ENCODE measurements at regions of chr7 and their contacts with region 1.

Region 1: DNA sequence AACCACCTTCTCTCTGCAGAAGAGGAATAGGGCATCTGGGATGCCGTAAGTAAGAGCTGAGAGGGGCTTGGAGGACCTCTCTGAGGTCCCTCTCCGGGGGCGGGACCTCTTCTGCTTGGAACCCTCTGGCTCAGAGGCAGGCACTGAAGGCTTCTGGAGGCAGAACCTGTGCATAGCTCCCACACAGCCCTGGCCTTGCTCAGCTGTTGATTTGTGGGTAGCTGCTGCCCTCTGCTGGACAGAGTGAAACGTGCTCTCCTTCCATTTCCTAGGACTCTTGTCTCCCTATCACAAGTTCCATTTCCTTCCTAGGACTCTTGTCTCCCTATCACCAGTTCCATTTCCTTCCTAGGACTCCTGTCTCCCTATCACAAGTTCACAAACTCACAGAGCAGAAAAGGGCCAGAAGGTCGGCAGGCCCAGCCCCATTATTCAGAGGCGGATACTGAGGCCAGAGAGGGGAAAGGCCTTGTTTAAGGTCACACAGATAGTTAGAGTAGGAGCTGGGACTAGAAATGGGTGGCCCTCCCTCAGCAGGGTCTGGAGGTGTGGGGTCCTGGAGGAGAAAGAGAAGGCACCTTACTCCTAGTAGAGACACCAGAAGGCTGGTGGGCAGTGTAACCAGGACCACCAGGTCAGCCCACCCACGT is 30.3 kb upstream of the GARS1 start:
- DNase-seq: peak; percentile 89

Region 2: DNA sequence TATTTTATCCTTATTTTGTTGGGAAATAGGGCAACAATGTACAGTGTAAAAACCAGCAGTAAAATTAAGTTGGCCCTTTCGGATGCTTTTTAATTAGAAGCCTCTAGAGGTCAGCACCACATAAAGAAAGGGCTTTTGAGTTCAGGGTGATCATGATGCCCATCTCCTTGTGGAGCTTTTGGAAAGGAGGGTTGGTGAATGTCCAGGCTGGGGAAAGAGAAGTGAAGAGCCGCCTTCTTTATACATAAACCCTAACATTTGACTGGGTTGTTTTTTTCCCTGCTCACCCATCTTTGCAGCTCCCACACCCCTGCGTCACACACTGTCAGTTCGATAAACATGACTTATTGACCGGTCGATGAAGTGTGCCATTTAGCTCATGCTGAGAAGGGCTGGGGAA is 399.8 kb before region 1 on chr7:
- intact Hi-C with region 1: loop called (anchors 2 kb)
- DNase-seq: no peak

Region 3: DNA sequence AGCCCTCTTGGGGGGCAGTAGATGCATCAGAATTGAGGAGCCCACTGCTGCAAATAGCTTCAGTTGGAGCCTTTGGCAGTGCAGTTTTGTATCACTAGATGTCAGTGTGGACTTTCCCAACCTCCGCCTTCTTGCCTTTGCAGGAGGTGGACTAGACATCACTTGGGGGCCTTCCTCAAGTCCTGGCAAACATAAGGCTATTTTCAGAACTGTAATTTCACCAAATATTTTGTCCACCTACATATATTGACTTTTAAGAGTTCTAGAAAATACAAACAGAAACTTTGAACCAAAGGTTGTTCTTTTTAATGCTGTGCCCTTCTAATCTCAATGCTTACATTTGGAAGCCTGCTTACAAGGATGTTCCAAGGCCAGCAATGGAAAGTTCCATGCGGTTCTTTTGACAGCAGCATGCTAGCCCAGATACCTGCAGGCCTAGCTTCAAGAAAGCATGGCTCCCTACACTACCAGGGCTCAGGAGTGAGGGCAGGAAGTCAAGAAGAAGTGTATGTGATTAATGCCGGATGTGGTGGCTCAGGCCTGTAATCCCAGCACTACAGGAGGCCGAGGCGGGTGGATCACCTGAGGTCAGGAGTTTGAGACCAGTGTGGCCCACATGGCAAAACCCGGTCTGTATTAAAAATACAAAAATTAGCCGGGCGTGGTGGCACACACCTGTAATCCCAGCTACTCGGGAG is 288.0 kb before region 1 on chr7:
- intact Hi-C with region 1: loop called (anchors 5 kb)
- DNase-seq: no peak

Region 4: DNA sequence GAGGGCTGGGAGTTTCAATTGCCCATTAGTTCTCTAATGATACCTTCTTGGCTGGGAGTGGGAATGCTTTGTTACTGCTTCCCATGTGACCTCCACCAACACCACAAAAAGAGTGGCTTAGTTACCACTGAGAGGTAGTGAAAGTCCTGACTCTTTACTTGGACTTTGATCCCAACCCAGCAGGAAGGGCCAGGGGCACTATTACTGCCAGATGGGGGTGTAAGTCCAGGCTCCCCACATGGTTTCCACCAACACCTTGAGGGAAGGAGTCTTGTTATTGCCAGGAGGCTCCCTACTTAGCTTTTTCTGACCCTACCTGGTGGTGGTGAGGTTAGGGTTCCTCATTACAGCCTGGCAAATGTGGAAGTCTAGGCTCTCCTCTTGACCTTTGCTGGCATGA is 71.1 kb before region 1 on chr7:
- intact Hi-C with region 1: no loop called
- DNase-seq: no peak

Region 5: DNA sequence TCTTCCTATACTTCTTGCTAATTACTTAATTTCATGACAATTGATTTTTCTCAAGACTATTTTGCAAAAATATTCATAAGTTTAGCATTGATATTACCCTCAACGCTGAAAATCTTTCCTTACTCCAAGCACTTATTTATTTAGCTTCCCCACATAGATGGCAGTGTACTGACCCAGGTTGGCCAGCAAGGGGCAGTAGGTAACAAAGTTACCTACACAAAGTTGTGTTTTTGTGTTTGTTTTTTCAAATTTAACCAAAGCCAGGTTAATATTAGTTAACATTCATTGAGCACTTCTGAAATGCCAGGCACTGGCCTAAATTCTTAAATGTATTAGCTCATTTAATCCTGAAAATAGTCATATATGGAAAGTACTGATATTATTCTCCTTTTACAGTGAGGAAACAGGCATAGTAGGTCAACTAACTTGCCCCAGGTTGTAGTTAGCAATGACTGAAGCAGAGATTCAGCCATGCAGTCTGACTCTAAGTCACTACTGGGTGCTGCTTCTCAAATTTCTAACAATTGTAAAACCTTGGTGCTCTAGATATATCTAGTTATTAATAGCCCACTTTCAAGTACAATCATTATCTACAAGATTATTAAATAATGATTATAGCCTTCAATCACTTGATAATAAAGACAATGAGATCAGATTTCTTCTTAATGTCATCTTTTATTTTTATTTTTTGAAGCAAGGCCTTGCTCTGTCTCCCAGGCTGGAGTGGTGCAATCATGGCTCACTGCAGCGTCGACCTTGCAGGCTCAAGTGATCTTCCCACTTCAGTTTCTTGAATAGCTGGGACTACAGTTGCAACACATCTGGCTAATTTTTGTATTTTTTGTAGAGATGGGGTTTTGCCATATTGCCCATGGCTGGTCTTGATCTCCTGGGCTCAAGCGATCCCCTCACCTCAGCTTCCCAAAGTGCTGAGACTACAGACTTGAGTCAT is 54.0 kb before region 1 on chr7:
- intact Hi-C with region 1: loop called (anchors 5 kb)
- DNase-seq: no peak

Region 6: DNA sequence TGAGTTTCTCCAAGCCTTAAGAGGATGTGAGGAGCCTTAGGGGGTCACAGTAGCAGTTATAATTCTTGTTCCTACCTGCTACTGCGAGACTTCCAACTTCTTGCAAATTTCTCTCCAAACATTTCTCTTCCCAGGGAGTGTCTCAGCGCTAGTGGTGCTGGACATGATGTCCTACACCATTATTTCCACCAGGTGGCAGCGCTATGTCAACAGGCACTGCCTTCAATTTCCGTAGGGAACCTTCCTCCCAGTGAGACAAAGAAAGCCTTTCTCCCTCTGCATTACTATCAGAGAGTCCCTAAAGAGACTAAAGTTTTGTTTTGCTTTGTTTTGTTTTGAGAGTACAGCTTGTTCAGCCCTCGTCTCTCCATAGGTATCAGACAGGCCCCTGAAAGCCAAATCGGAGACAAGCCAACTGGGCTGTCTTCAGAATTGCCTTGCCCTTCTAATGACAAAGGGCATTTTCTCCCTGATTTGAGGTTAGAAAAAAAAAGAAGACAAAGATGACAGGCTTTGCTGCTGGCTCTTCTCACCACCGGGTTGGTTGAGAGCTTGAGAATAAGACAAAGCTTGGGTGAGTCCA is 15.5 kb before region 1 on chr7:
- intact Hi-C with region 1: loop called (anchors 2 kb)
- DNase-seq: no peak

Measured in cardiac septum (tissue), 1 donor.